ENCODE measurements at regions of chr2 and their contacts with region 1.

Region 1: GRCh38 chr2:44981136-44982108 is 27.8 kb downstream of the SIX2 start:
- DNase-seq: peak; percentile 53 to 97 (median 83)

Region 2: GRCh38 chr2:45494269-45494977 is 513.0 kb after region 1 on chr2:
- intact Hi-C with region 1: loop called (anchors 1 kb)
- DNase-seq: no peak

Region 3: GRCh38 chr2:45578056-45578809 is 596.8 kb after region 1 on chr2:
- intact Hi-C with region 1: loop called (anchors 5 kb)
- DNase-seq: no peak